A673 (cell line): ENCODE measurements at regions of chr19 and their contacts with region 1.

Region 1: GRCh38 chr19:49983645-49984229 is 22.8 kb upstream of the SIGLEC11 start:
- DNase-seq: peak; percentile 71
- H3K4me3 ChIP-seq: no peak overlapping the region
- H3K27ac ChIP-seq: no peak overlapping the region
- H3K4me1 ChIP-seq: no peaks in the 10 kb centered on the region
- H3K27me3 ChIP-seq: no peaks in the 10 kb centered on the region
- CTCF ChIP-seq: peak; percentile 96

Region 2: DNA sequence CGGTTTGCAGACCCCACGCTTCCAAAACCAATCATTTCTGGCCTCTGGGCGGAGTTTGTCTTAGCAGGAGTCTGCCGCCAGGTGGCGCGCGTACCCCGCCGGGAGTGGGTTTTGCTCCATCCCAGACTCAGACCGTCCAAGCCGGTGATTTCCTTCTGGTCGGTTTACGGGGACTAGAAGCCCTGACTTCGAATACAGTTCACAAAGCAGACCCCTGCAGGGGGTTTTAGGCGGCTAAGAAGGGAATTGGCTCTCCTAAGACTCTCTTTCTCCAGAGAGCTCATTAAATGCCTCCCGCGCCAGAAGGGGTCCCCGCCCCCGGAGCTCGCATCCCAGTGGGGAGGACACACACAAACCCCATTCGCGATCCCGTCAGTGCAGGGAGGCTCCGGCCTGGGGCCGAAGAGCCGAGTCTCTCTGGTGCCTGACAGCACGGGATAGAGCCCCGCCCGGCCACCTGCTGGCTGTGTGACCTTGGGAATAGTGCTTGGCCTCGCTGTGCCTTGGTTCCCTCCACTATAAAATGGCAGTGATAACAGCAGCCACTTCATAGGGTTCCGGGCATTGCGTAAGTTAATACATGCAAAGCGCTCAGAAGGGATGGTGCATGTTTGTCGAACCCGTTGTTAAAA is 45.9 kb before region 1 on chr19:
- CTCF ChIA-PET with region 1: interaction called, 4 read pairs
- POLR2A ChIA-PET with region 1: no interaction called
- intact Hi-C with region 1: loop called (anchors 1 kb)
- DNase-seq: peak; percentile 85
- H3K4me3 ChIP-seq: peak overlapping the region; percentile 34
- H3K27ac ChIP-seq: no peak overlapping the region
- H3K4me1 ChIP-seq: no peaks in the 10 kb centered on the region
- H3K27me3 ChIP-seq: no peaks in the 10 kb centered on the region
- CTCF ChIP-seq: peak; percentile 96